ENCODE measurements at regions of chr1 and their contacts with region 1.

Region 1: DNA sequence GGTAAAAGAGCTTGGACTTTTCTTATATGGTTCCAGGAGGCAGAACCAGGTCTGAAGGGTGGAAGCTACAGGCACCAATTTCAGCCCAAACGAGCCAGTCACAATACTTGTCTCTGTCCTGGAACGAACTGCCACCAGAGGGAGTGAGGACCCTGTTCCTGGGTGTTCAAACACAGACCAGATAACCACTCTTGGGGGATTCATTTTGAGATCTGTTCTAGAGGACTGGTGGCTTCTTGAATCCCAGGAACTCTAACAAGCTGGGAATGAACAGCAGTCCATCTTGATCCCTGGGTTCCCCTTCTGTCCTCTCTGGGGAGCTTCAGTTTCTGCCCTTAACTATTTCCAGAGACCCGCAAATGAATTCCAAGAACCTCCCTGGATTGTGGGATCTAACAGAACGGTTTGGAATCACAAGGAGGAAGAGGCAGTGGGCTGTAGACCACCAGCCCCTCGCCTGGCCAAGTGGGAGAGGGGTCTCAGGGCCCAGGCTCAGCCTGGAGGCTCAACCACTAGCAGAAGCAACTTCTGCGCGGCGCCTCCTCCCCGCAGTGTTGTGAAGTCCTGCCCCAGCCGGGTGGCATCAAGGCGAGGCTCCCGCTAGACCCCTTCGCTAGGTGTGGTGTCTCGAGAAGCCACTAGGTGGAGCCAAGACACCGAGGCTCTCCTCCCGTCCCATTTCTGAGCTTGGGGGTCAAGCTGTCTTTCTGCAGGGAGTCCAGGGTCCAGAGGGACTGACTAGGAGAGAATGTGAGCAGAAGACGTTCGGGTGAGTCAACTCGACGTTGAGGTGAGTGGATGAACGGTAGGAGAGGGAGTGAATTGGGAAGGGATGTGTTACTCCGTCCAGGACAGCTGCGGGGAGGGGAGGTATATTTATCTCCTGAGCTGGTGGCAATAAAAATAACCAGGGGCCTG is 12.1 kb upstream of the NES start:
- DNase-seq: peak; percentile 83
- ATAC-seq: peak; percentile 94
- H3K4me3 Mint-ChIP-seq: no peak overlapping the region
- H3K27ac Mint-ChIP-seq: no peak overlapping the region
- H3K4me1 Mint-ChIP-seq: peaks cover 29% of the 10 kb centered on the region
- H3K27me3 Mint-ChIP-seq: peaks cover 67% of the 10 kb centered on the region

Region 2: DNA sequence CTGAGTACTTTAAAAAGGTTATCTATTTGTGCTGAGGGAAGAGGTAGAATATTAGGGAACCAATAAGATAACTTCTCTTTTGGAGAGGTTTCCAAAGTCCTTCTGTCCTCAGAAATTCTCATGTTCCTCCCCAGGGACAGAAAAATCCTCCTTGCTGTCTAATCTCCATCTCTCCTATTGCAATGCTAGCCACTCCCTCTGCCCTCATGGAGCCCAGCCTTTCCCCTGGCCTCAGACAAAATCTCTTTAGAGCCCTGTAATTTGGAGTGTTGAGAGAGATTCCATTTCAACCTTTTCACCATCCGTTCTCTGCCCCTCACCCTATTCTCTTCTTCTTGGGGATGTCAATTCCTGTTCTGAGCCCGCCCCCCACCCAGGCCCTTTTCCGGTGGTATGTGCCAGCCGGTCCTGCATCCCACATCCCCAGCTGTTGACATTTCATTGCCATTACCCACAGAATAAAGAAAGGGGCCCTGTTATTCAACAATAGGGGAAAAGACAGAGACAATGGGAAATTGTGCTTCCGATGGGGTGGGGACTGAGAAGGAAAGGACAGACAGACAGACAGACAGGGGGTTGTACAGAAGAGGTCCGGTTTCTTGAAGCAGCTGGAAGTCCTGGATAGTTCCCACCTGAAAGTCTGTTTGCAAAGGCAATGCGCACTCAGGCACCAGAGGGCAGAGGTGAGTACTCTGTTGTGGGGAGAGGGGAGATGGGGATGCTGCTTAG is 70.3 kb before region 1 on chr1 and contains the start of gene HAPLN2:
- CTCF ChIA-PET with region 1: interaction called, 170 read pairs
- DNase-seq: no peak
- ATAC-seq: peak; percentile 46
- H3K4me3 Mint-ChIP-seq: no peak within 1 kb of the TSS
- H3K27ac Mint-ChIP-seq: no peak within 1 kb of the TSS
- H3K4me1 Mint-ChIP-seq: no peaks in the 10 kb centered on the region
- H3K27me3 Mint-ChIP-seq: peaks cover 63% of the 10 kb centered on the region
- total RNA-seq, gene HAPLN2: not detected

Region 3: GRCh38 chr1:156659994-156660751 is 29.1 kb before region 1 on chr1:
- CTCF ChIA-PET with region 1: interaction called, 185 read pairs
- DNase-seq: peak; percentile 97
- ATAC-seq: peak; percentile 81
- H3K4me3 Mint-ChIP-seq: peak overlapping the region; percentile 82
- H3K27ac Mint-ChIP-seq: peak overlapping the region; percentile 95
- H3K4me1 Mint-ChIP-seq: peaks cover 68% of the 10 kb centered on the region
- H3K27me3 Mint-ChIP-seq: peaks cover 24% of the 10 kb centered on the region

Region 4: DNA sequence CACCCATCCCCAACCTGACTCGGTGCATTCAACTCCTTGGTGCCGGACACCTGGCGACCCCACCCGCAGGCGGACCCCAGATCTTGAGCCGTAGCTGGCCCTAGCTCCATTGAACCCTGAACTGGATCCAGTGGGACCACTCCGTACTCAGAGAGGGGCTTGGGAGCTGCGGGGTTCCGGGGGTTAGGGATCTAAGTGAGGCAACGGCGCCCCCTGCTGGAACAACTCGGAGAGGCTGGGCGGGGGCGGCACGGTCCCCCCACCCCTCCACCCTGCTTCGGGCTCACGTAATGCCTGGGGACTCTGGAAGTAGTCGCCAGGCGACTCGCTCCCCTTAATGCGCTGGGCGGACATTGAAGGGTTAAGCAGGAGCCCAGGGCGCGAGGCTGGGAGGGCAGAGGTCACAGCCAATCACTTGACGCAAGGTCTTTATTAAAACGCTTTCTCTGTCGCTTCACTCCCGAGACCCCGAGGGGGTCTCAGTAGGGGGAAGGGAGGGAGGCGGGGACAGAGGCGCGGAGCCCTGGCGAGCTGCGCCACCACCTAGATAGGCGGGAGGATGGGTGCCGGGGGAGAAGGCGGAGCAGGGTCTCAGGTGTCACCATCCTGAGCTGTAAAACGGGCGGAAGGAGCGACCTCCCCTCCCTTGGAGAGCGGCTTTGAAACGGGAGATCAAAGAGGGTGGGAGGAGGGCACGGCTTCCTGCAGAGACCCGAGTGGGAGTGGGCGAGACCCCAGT is 16.8 kb after region 1 on chr1:
- CTCF ChIA-PET with region 1: interaction called, 286 read pairs
- DNase-seq: peak; percentile 70
- ATAC-seq: peak; percentile 77
- H3K4me3 Mint-ChIP-seq: peak overlapping the region; percentile 56
- H3K27ac Mint-ChIP-seq: no peak overlapping the region
- H3K4me1 Mint-ChIP-seq: peaks cover 20% of the 10 kb centered on the region
- H3K27me3 Mint-ChIP-seq: peaks cover 43% of the 10 kb centered on the region

Region 5: GRCh38 chr1:156717275-156717805 is 28.0 kb after region 1 on chr1:
- CTCF ChIA-PET with region 1: interaction called, 49 read pairs
- DNase-seq: no peak
- ATAC-seq: no peak
- H3K4me3 Mint-ChIP-seq: no peak overlapping the region
- H3K27ac Mint-ChIP-seq: no peak overlapping the region
- H3K4me1 Mint-ChIP-seq: peaks cover 15% of the 10 kb centered on the region
- H3K27me3 Mint-ChIP-seq: no peaks in the 10 kb centered on the region

Region 6: GRCh38 chr1:156860113-156860627 is 170.9 kb after region 1 on chr1:
- CTCF ChIA-PET with region 1: interaction called, 83 read pairs
- DNase-seq: peak; percentile 69
- ATAC-seq: peak; percentile 65
- H3K4me3 Mint-ChIP-seq: peak overlapping the region; percentile 72
- H3K27ac Mint-ChIP-seq: no peak overlapping the region
- H3K4me1 Mint-ChIP-seq: peaks cover 43% of the 10 kb centered on the region
- H3K27me3 Mint-ChIP-seq: peaks cover 42% of the 10 kb centered on the region

Region 7: GRCh38 chr1:156892190-156893047 is 203.1 kb after region 1 on chr1:
- CTCF ChIA-PET with region 1: interaction called, 47 read pairs
- DNase-seq: peak; percentile 91
- ATAC-seq: peak; percentile 97
- H3K4me3 Mint-ChIP-seq: peak overlapping the region; percentile 39
- H3K27ac Mint-ChIP-seq: no peak overlapping the region
- H3K4me1 Mint-ChIP-seq: peaks cover 12% of the 10 kb centered on the region
- H3K27me3 Mint-ChIP-seq: peaks cover 68% of the 10 kb centered on the region